ENCODE measurements at regions of chr13 and their contacts with region 1.

Region 1: GRCh38 chr13:105918842-105919741 is 616.4 kb downstream of the EFNB2 start:
- DNase-seq: no peak
- ATAC-seq: peak in 3 of 8 donors; percentile 53 to 82 (median 59)
- H3K4me3 ChIP-seq: no peak overlapping the region
- H3K27ac ChIP-seq: no peak overlapping the region
- H3K4me1 ChIP-seq: peaks cover 0 to 22% (median 5%) of the 10 kb centered on the region in 9 donors
- H3K27me3 ChIP-seq: peaks cover 0 to 3% (median 0%) of the 10 kb centered on the region in 7 donors
- CTCF ChIP-seq: no peak

Region 2: GRCh38 chr13:105979131-105980011 is 60.3 kb after region 1 on chr13:
- intact Hi-C with region 1: loop called in 1 of 10 experiments (anchors 10 kb)
- DNase-seq: no peak
- ATAC-seq: no peak
- H3K4me3 ChIP-seq: no peak overlapping the region
- H3K27ac ChIP-seq: no peak overlapping the region
- H3K4me1 ChIP-seq: no peaks in the 10 kb centered on the region
- H3K27me3 ChIP-seq: no peaks in the 10 kb centered on the region
- CTCF ChIP-seq: no peak

Region 3: DNA sequence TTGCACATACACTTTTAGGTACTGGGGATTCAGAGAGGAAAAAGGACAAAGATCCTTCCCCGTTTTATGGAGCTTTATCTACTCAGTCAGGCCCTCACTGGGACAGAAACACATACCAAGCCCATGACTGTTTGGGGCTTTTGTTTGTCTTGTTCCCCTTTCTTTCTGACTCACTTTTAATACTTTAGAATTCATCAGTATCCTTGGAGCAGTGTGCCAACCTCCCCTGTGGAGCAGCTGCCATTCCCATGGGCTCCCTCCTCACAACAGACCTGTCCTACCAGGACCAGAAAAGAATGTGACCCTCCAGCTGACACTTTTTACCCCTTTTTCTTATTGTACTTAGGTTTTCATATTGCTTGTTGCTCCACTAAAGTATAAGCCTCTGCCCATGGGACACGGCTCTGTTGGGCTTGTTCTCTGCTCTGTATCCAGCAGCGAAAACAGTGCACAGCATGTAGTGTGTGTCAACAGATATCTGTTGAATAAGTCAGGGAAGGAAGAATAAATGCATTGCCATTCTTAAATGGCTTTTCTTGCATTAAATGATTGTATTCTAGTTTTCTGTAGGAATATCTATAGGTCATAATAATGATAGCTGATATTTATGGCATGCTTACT is 185.3 kb after region 1 on chr13:
- intact Hi-C with region 1: no loop called
- DNase-seq: no peak
- ATAC-seq: no peak
- H3K4me3 ChIP-seq: no peak overlapping the region
- H3K27ac ChIP-seq: no peak overlapping the region
- H3K4me1 ChIP-seq: peaks cover 0 to 17% (median 0%) of the 10 kb centered on the region in 9 donors
- H3K27me3 ChIP-seq: no peaks in the 10 kb centered on the region
- CTCF ChIP-seq: no peak

Measured in heart right ventricle (tissue), 16 donors.